ENCODE measurements at regions of chr9 and their contacts with region 1.

Region 1: DNA sequence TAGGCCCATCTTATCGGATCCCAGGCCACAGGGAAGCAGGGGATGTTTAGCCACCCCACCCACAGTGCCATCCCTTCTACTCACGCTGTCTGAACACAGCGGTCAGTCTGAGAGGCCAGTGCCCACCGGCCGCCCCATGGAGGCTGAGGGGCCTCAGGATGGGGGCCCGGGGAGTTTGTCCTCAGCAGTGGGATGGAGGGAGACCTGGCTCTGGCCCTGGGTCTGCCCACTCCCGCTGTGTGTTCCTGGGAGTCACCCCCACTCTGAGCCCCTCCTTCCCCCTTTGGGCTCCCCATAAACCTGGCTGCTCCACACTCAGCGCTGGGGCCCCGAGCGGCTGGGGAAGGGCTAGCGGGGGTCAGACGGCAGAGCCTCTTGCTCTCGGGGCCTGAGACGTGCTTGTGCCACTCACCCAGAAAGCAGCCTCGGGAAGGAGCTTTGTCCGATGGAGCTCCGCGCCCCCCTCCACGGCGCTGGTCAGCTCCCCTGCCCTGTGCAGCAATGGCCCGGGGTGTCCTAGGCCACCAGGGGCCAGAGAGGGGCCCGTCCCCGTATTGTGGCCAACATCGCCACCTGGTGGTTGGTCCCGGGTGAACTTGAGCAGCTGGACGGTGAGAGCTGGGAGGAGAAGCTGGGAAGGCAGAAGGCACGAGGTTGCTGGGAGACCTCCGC is 10.9 kb upstream of the LAMC3 start:
- DNase-seq: no peak
- H3K4me3 ChIP-seq: no peak overlapping the region
- H3K27me3 ChIP-seq: peaks cover 19% of the 10 kb centered on the region
- CTCF ChIP-seq: peak; percentile 80

Region 2: GRCh38 chr9:130701056-130702022 is 296.7 kb before region 1 on chr9:
- CTCF ChIA-PET with region 1: interaction called, 55 read pairs
- POLR2A ChIA-PET with region 1: no interaction called
- DNase-seq: no peak
- H3K4me3 ChIP-seq: no peak overlapping the region
- H3K27me3 ChIP-seq: no peaks in the 10 kb centered on the region
- CTCF ChIP-seq: peak; percentile 99

Region 3: GRCh38 chr9:130707225-130707976 is 290.7 kb before region 1 on chr9:
- CTCF ChIA-PET with region 1: interaction called, 15 read pairs
- POLR2A ChIA-PET with region 1: no interaction called
- DNase-seq: no peak
- H3K4me3 ChIP-seq: no peak overlapping the region
- H3K27me3 ChIP-seq: no peaks in the 10 kb centered on the region
- CTCF ChIP-seq: peak; percentile 65

Region 4: GRCh38 chr9:130891688-130892476 is 106.2 kb before region 1 on chr9:
- CTCF ChIA-PET with region 1: interaction called, 18 read pairs
- POLR2A ChIA-PET with region 1: no interaction called
- DNase-seq: no peak
- H3K4me3 ChIP-seq: no peak overlapping the region
- H3K27me3 ChIP-seq: no peaks in the 10 kb centered on the region
- CTCF ChIP-seq: no peak

Region 5: DNA sequence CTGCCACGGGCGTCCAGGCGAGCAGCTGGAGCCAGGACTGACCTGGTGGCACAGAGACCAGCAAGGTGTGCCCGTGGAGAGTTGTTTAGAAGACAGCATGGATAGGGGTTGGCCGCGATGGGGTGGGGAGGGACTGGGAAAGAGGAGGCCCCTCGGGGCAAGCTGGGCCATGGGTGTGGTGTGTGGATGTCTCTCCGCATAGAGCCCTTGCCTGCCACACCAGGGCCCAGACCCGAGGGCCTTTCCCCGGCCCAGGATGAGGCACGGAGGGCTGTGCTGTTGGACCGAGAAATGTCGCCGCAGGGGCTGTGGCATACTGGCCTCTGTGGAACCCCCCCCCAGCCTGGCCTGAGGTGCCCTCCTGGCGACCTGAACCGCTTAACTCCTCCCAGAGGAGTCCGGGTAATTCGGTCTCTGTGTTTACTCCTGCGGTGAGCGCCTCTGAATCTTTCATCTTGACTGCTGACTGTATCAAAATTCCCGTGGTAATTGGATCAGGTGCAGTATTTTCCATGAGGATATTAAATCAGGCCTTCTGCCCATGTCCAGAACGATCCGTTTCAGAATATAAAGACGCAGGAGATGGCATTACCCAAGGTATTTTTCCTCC is 11.6 kb before region 1 on chr9:
- CTCF ChIA-PET with region 1: interaction called, 17 read pairs
- POLR2A ChIA-PET with region 1: no interaction called
- DNase-seq: no peak
- H3K4me3 ChIP-seq: no peak overlapping the region
- H3K27me3 ChIP-seq: peaks cover 15% of the 10 kb centered on the region
- CTCF ChIP-seq: no peak

Region 6: GRCh38 chr9:131008909-131009618 is 11.0 kb after region 1 on chr9 and contains the start of gene LAMC3:
- CTCF ChIA-PET with region 1: interaction called, 25 read pairs
- POLR2A ChIA-PET with region 1: no interaction called
- DNase-seq: no peak
- H3K4me3 ChIP-seq: no peak within 1 kb of the TSS; the same call in 1 of the 2 replicates
- H3K27me3 ChIP-seq: peaks cover 33% of the 10 kb centered on the region
- CTCF ChIP-seq: peak; percentile 44
- polyA plus RNA-seq, gene LAMC3: 0.01 TPM in 1 of 2 replicates, not detected in the other

Region 7: DNA sequence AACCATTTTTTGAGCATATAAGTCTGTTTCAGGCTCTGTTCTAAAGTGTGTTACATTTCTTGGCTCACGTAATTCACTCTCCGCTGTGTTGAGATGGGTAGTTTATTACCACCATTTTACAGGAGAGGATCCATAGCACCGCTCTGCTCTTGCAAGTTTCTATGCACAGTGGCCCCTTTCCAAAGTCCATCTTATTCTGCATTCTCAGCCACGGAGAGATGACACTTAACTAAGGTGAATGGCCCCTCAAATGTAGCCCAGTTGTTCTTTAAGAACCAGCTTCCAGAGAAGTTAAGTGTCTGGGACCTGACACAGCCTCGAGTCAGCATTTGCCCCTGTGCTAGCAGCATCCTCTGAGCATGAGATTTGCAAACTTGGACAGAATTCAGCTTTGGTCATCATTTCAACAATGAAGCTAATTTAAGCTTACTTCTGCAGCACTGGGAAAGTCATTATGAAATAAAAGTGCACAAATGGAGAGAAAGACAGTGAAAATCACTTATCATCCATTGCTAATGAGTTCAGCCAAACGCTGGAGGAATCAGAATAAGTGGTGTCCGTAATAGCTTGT is 216.3 kb after region 1 on chr9:
- CTCF ChIA-PET with region 1: no interaction called
- POLR2A ChIA-PET with region 1: no interaction called
- DNase-seq: no peak
- H3K4me3 ChIP-seq: no peak overlapping the region
- H3K27me3 ChIP-seq: no peaks in the 10 kb centered on the region
- CTCF ChIP-seq: no peak

Measured in BJ (cell line).